ENCODE measurements at regions of chr10 and their contacts with region 1.

Region 1: GRCh38 chr10:79374312-79375191 is 27.3 kb downstream of the PPIF start:
- DNase-seq: peak; percentile 89 to 93
- ATAC-seq: peak; percentile 78
- H3K4me3 ChIP-seq: no peak overlapping the region
- H3K27ac ChIP-seq: no peak overlapping the region
- H3K4me1 ChIP-seq: no peaks in the 10 kb centered on the region
- H3K27me3 ChIP-seq: no peaks in the 10 kb centered on the region

Region 2: GRCh38 chr10:79073784-79074432 is 300.6 kb before region 1 on chr10:
- intact Hi-C with region 1: no loop called
- DNase-seq: peak in 1 of 2 donors; percentile 70
- ATAC-seq: no peak
- H3K4me3 ChIP-seq: no peak overlapping the region
- H3K27ac ChIP-seq: no peak overlapping the region
- H3K4me1 ChIP-seq: peaks cover 0 to 2% of the 10 kb centered on the region in 2 donors
- H3K27me3 ChIP-seq: no peaks in the 10 kb centered on the region

Region 3: GRCh38 chr10:79463578-79464496 is 89.3 kb after region 1 on chr10:
- intact Hi-C with region 1: loop called (anchors 1 to 2 kb)
- DNase-seq: peak in 1 of 2 donors; percentile 69
- ATAC-seq: peak; percentile 48
- H3K4me3 ChIP-seq: no peak overlapping the region
- H3K27ac ChIP-seq: no peak overlapping the region
- H3K4me1 ChIP-seq: no peaks in the 10 kb centered on the region
- H3K27me3 ChIP-seq: no peaks in the 10 kb centered on the region

Measured in aorta (tissue), 5 donors.